Activated naive CD4-positive, alpha-beta T cell treated with anti-CD3 and anti-CD28 coated beads for 36 hours (primary cell): ENCODE measurements at regions of chr3 and their contacts with region 1.

Region 1: DNA sequence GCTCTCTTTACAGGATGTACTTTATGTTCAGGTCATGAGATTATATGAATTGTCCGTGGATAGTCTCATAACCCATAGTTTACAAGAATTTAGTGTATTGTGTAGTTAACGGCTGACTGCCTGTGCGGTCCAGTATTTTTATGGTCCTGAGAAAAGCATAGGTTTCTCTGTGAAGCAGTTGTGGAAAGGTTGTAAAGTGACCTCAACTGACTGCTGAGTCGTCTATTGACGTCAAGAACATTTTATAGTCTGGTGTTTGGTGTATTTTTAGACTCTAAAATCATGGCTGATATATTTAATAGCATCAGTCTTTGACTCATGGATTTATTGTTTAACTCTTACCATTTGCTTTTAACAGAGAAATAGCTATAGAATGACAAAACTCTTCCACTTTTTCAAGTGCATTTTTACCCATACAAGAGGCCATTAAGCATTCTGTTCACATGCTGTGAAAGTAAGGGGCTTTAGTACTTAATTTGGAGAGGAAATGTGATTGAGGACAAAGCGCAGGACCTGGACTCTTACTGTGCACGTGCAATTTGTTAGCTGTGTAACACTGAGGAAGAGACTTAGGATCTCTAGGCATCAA is 240.7 kb downstream of the NFKBIZ start:
- DNase-seq: no peak
- H3K4me3 Mint-ChIP-seq: no peak overlapping the region
- H3K27ac Mint-ChIP-seq: no peak overlapping the region
- H3K4me1 Mint-ChIP-seq: peaks cover 44% of the 10 kb centered on the region
- H3K27me3 Mint-ChIP-seq: no peaks in the 10 kb centered on the region

Region 2: GRCh38 chr3:101512646-101513418 is 577.2 kb before region 1 on chr3 and contains the start of gene SENP7:
- CTCF ChIA-PET with region 1: no interaction called
- intact Hi-C with region 1: loop called (anchors 10 kb)
- DNase-seq: peak; percentile 89
- H3K4me3 Mint-ChIP-seq: peak within 1 kb of the TSS; percentile 97
- H3K27ac Mint-ChIP-seq: peak within 1 kb of the TSS; percentile 97
- H3K4me1 Mint-ChIP-seq: peaks cover 50% of the 10 kb centered on the region
- H3K27me3 Mint-ChIP-seq: no peaks in the 10 kb centered on the region
- total RNA-seq, gene SENP7: 16.1 to 16.8 TPM

Region 3: GRCh38 chr3:101814835-101815234 is 275.2 kb before region 1 on chr3:
- CTCF ChIA-PET with region 1: interaction called, 7 read pairs
- intact Hi-C with region 1: loop called (anchors 1 kb)
- DNase-seq: no peak
- H3K4me3 Mint-ChIP-seq: no peak overlapping the region
- H3K27ac Mint-ChIP-seq: no peak overlapping the region
- H3K4me1 Mint-ChIP-seq: peaks cover 60% of the 10 kb centered on the region
- H3K27me3 Mint-ChIP-seq: no peaks in the 10 kb centered on the region

Region 4: DNA sequence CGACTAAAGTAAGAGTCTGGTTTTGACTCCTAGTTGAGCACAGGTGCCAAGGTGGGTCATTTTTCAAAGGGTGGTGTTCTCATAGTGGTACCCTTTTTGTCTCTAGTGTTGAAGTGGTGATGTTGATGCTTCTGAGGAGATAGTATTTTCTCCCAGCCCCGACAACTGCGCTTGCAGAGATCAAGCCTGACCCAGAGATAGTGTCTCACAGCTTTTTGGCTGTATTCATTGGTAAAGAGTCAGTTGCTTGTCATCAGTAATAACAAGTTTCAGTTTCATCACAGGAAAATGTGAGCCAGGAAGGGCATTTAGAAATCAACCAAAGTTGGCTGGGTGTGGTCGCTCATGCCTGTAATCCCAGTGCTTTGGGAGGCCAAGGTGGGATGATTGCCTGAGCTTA is 101.4 kb before region 1 on chr3:
- CTCF ChIA-PET with region 1: no interaction called
- intact Hi-C with region 1: no loop called
- DNase-seq: peak; percentile 31
- H3K4me3 Mint-ChIP-seq: no peak overlapping the region
- H3K27ac Mint-ChIP-seq: no peak overlapping the region
- H3K4me1 Mint-ChIP-seq: peaks cover 21% of the 10 kb centered on the region
- H3K27me3 Mint-ChIP-seq: no peaks in the 10 kb centered on the region

Region 5: GRCh38 chr3:102024270-102024904 is 65.6 kb before region 1 on chr3:
- CTCF ChIA-PET with region 1: interaction called, 3 read pairs
- intact Hi-C with region 1: loop called (anchors 1 kb)
- DNase-seq: peak; percentile 68
- H3K4me3 Mint-ChIP-seq: no peak overlapping the region
- H3K27ac Mint-ChIP-seq: no peak overlapping the region
- H3K4me1 Mint-ChIP-seq: peaks cover 27% of the 10 kb centered on the region
- H3K27me3 Mint-ChIP-seq: no peaks in the 10 kb centered on the region

Region 6: GRCh38 chr3:102106416-102107097 is 16.6 kb after region 1 on chr3:
- CTCF ChIA-PET with region 1: interaction called, 4 read pairs
- intact Hi-C with region 1: loop called (anchors 1 kb)
- DNase-seq: peak; percentile 59
- H3K4me3 Mint-ChIP-seq: no peak overlapping the region
- H3K27ac Mint-ChIP-seq: no peak overlapping the region
- H3K4me1 Mint-ChIP-seq: peaks cover 16% of the 10 kb centered on the region
- H3K27me3 Mint-ChIP-seq: no peaks in the 10 kb centered on the region

Region 7: GRCh38 chr3:102163036-102163827 is 73.2 kb after region 1 on chr3:
- CTCF ChIA-PET with region 1: no interaction called
- intact Hi-C with region 1: loop called (anchors 2 kb)
- DNase-seq: peak; percentile 31
- H3K4me3 Mint-ChIP-seq: no peak overlapping the region
- H3K27ac Mint-ChIP-seq: peak overlapping the region; percentile 6
- H3K4me1 Mint-ChIP-seq: peaks cover 25% of the 10 kb centered on the region
- H3K27me3 Mint-ChIP-seq: no peaks in the 10 kb centered on the region